Activated CD4-positive, alpha-beta T cell treated with anti-CD3 and anti-CD28 coated beads for 36 hours (primary cell): ENCODE measurements at regions of chr12 and their contacts with region 1.

Region 1: GRCh38 chr12:54214553-54215406 is 26.0 kb upstream of the SMUG1 start:
- DNase-seq: peak; percentile 97
- ATAC-seq: peak; percentile 92
- H3K4me3 Mint-ChIP-seq: peak overlapping the region; percentile 63
- H3K27ac Mint-ChIP-seq: no peak overlapping the region
- H3K4me1 Mint-ChIP-seq: peaks cover 26% of the 10 kb centered on the region
- H3K27me3 Mint-ChIP-seq: peaks cover 15% of the 10 kb centered on the region

Region 2: GRCh38 chr12:52249051-52249461 is 1965.7 kb before region 1 on chr12:
- CTCF ChIA-PET with region 1: no interaction called
- POLR2A ChIA-PET with region 1: no interaction called
- intact Hi-C with region 1: no loop called
- DNase-seq: no peak
- ATAC-seq: no peak
- H3K4me3 Mint-ChIP-seq: no peak overlapping the region
- H3K27ac Mint-ChIP-seq: no peak overlapping the region
- H3K4me1 Mint-ChIP-seq: peaks cover 23% of the 10 kb centered on the region
- H3K27me3 Mint-ChIP-seq: peaks cover 27% of the 10 kb centered on the region

Region 3: GRCh38 chr12:54201001-54201794 is 13.6 kb before region 1 on chr12:
- CTCF ChIA-PET with region 1: interaction called, 43 read pairs
- POLR2A ChIA-PET with region 1: no interaction called
- intact Hi-C with region 1: no loop called
- DNase-seq: peak; percentile 83
- ATAC-seq: peak; percentile 95
- H3K4me3 Mint-ChIP-seq: no peak overlapping the region
- H3K27ac Mint-ChIP-seq: no peak overlapping the region
- H3K4me1 Mint-ChIP-seq: no peaks in the 10 kb centered on the region
- H3K27me3 Mint-ChIP-seq: peaks cover 44% of the 10 kb centered on the region

Region 4: DNA sequence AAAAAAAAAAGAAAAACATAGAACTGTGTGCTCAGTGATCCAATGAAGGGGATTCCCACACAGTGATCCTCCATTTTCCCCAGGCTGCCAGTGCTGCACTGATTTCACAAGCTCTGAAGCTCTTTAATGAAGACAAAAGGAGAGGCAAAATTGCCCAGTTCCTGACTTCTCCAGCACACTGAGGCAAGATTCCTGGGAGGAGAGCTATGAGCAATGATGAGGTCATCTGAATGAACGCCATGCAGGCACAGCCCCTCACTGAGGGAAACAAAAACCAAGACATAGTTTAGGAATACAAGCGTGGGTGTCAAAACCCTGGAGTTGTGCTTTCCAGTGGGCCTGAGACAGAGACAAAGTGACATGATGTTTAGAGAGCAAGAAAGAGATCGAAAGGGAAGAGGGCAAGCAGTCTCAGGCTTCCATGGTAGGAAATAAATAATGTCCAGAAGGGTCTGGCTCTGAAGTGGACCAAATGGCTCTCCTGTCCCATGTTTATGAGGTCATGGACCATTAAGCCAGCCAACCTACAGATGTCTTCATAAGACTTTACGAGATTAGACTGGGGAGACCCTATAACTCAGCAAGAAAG is 14.9 kb after region 1 on chr12:
- CTCF ChIA-PET with region 1: interaction called, 11 read pairs
- POLR2A ChIA-PET with region 1: no interaction called
- intact Hi-C with region 1: no loop called
- DNase-seq: no peak
- ATAC-seq: no peak
- H3K4me3 Mint-ChIP-seq: no peak overlapping the region
- H3K27ac Mint-ChIP-seq: peak overlapping the region; percentile 4
- H3K4me1 Mint-ChIP-seq: peaks cover 6% of the 10 kb centered on the region
- H3K27me3 Mint-ChIP-seq: no peaks in the 10 kb centered on the region

Region 5: GRCh38 chr12:54571193-54572188 is 356.7 kb after region 1 on chr12:
- CTCF ChIA-PET with region 1: no interaction called
- POLR2A ChIA-PET with region 1: no interaction called
- intact Hi-C with region 1: no loop called
- DNase-seq: no peak
- ATAC-seq: no peak
- H3K4me3 Mint-ChIP-seq: no peak overlapping the region
- H3K27ac Mint-ChIP-seq: no peak overlapping the region
- H3K4me1 Mint-ChIP-seq: no peaks in the 10 kb centered on the region
- H3K27me3 Mint-ChIP-seq: no peaks in the 10 kb centered on the region